GM12878 (cell line): ENCODE measurements at regions of chr14 and their contacts with region 1.

Region 1: DNA sequence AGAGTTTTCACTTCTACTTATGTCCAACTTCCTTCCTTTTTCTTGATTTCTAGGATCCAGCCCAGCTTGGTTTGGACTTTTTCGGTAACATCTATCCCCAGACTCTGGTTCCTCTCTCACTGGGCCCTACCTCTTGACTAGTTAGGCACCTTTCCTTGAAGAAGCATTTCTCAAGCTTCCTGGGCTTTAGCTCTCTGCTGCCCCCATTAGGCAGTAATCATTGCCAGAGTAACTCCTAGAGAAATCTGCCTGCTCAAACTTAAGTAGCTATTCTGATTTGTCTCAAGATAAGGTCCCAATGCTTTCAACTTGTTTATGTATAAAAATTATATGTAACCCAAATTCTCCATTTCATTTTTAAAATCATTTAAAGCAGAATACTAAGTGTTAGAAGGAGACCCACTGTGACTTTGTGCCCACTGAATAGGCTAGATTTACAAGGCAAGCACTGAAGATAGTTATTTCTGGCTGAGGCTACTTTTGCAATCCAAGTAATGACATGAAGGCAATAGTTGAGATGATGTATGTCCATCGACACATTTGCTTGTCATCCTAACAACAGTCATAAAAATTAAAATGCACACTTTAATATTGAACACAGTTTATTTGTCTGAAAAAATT is 275.0 kb upstream of the G2E3 start:
- DNase-seq: no peak
- ATAC-seq: peak; percentile 71
- H3K4me3 ChIP-seq: no peak overlapping the region
- H3K27ac ChIP-seq: no peak overlapping the region
- H3K4me1 ChIP-seq: no peaks in the 10 kb centered on the region
- H3K27me3 ChIP-seq: no peaks in the 10 kb centered on the region
- CTCF ChIP-seq: peak; percentile 41 to 65 (median 65)
- EP300 ChIP-seq: no peak
- POLR2A ChIP-seq: no peak
- RAD21 ChIP-seq: peak; percentile 41; the same call in 1 of the 2 replicates

Region 2: DNA sequence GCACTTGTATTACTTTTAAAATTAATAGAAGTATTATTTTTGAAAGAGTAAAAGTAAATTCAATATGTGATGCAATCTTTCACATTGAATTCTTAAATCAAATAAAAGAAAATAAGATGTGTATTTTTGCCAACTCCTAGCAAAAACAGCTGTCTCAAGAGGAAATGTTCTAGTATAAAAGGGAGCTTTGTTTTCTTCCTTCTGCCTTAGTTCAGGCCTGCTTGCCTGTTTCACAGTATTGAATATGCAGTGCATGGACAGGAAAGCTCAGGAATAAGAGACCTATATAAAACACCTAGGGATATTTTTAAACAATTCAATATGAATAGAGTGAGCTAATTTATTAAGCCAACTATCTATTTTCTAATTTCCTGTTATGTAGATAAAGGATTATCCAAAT is 19.8 kb before region 1 on chr14:
- CTCF ChIA-PET with region 1: interaction called, 173 read pairs
- POLR2A ChIA-PET with region 1: no interaction called
- RAD21 ChIA-PET with region 1: no interaction called
- SMC1A ChIA-PET with region 1: no interaction called
- in situ Hi-C with region 1: no loop called
- intact Hi-C with region 1: no loop called
- DNase-seq: no peak
- ATAC-seq: no peak
- H3K4me3 ChIP-seq: no peak overlapping the region
- H3K27ac ChIP-seq: no peak overlapping the region
- H3K4me1 ChIP-seq: no peaks in the 10 kb centered on the region
- H3K27me3 ChIP-seq: no peaks in the 10 kb centered on the region
- CTCF ChIP-seq: no peak
- EP300 ChIP-seq: no peak
- POLR2A ChIP-seq: no peak
- RAD21 ChIP-seq: no peak

Region 3: GRCh38 chr14:30309405-30309804 is 25.5 kb after region 1 on chr14:
- CTCF ChIA-PET with region 1: interaction called, 15 read pairs
- POLR2A ChIA-PET with region 1: no interaction called
- RAD21 ChIA-PET with region 1: no interaction called
- SMC1A ChIA-PET with region 1: no interaction called
- in situ Hi-C with region 1: no loop called
- intact Hi-C with region 1: no loop called
- DNase-seq: no peak
- ATAC-seq: no peak
- H3K4me3 ChIP-seq: no peak overlapping the region
- H3K27ac ChIP-seq: no peak overlapping the region
- H3K4me1 ChIP-seq: no peaks in the 10 kb centered on the region
- H3K27me3 ChIP-seq: no peaks in the 10 kb centered on the region
- CTCF ChIP-seq: no peak
- EP300 ChIP-seq: no peak
- POLR2A ChIP-seq: no peak
- RAD21 ChIP-seq: no peak